GM13976 (cell line): ENCODE measurements at regions of chr13 and their contacts with region 1.

Region 1: DNA sequence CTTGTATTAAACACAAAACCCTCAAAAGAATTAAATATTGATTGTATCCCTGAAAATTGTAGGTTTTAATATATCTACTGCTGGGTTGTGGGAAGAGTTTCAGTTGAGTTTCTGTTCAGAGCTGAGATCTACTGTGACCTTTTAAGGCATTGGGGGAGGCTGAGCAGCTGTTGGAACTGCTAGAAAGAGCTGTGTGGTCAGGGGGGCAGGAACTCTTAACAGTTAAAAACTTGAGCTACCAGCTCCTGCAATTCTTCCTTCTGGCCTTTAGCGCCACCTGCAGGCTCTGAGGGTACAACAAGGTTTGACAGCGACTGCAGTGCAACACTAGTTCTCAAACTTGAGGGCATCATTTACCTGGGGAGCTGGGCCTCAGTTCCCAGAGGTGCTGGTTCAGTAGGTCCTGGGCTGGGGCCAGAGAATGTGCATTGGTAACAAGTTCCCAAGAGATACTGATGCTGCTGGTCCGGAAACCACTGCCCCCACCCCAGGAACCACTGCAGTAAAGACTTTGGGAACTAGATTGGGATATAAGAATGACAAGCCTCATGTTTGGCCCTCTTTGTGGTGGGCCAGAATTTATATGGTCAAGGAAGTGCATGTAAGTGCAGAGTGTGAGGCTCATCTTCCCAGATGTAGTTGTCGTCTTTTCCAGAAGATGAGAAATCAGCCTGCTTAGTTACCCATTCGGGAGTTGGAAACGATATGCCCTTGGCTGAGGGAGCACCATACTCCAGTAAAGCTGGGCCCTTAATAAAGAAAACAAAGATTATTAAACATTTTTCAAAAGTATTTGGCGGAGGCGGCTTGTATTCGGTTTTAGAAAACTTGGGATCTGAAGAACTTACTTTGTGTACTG is 2.6 kb downstream of the RNASEH2B start:
- DNase-seq: peak; percentile 80
- CTCF ChIP-seq: peak; percentile 78

Region 2: DNA sequence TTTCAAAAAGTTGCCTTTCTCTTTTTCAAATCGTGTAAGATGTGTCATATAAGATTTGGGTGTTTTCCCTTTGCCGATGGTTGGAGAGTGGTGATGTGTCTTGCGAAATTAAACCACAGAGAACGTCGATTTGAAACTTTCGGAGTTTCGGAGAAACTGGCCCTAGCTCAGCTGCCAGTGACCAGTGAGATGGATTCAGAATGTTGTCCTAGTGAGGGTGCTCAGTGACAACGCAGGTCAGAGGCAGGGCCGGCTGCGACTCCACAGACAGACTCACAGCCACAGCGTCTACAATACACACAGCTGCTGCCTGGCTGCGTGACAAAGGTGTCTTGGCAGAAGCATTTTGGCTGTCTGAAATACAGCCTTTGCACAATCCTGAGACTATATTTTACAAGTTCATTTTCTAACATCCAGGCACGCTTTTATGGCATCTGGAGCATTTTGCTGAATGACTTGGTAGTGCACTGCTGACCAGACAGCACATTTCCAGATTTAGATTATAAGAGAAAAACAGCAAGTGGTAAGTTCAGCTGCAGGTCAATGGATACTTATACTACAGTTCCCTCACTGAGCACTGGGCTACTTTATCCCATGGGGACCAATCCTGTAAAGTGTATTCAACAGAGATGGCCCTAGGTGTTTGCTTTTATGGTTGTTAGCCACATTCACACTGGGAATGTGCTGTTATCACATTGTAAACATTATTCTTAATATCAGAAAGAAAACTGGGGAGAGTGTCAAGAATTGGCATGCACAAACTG is 689.4 kb before region 1 on chr13:
- in situ Hi-C with region 1: no loop called
- DNase-seq: no peak
- CTCF ChIP-seq: no peak

Region 3: DNA sequence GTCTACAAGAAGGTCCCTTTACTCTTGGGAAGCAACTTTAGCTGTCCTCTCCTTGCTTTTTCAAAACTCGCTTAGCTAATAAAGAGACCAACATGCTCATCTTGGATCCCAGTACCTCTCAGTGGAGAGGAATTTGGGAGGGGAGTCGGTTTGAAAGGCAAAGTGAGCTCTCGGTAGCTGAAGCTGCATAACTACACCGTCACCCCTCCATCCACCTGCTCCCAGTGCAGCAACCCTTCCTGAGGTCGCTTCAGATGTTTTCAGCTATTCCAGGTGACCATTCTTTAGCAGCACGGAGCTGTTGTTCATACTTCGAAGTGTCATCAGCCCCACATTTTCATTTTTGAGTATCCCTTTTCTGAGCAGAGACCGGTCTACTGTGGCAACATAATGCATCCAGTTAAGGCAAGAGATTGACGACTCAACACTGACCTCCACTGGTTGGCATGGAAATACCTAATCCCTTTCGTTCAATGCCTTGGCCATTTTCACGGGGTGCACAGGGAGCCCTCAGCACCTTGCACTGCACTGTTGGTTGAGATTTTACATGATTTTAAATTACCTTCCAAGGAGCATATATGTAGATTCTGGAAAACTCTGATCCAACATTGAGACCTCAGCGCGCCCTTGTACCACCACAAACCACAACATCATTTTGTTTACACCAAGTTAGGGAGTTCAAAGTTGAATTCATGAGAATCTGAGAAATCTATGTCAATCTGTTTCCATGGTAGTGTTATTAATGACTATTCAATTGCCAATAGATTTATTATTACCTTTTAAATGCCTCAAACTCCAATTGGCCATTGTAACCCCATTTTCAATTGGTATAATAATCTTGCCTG is 110.9 kb before region 1 on chr13:
- in situ Hi-C with region 1: loop called (anchors 10 kb)
- DNase-seq: peak; percentile 43
- CTCF ChIP-seq: peak; percentile 73